Activated CD4-positive, alpha-beta memory T cell treated with anti-CD3 and anti-CD28 coated beads for 36 hours (primary cell): ENCODE measurements at regions of chr16 and their contacts with region 1.

Region 1: GRCh38 chr16:62711797-62712196 is 675.6 kb upstream of the CDH8 start:
- DNase-seq: no peak
- H3K4me3 Mint-ChIP-seq: no peak overlapping the region
- H3K27ac Mint-ChIP-seq: no peak overlapping the region
- H3K4me1 Mint-ChIP-seq: no peaks in the 10 kb centered on the region
- H3K27me3 Mint-ChIP-seq: no peaks in the 10 kb centered on the region

Region 2: GRCh38 chr16:62530426-62530825 is 181.4 kb before region 1 on chr16:
- CTCF ChIA-PET with region 1: no interaction called
- POLR2A ChIA-PET with region 1: no interaction called
- intact Hi-C with region 1: loop called (anchors 10 kb)
- DNase-seq: no peak
- H3K4me3 Mint-ChIP-seq: no peak overlapping the region
- H3K27ac Mint-ChIP-seq: no peak overlapping the region
- H3K4me1 Mint-ChIP-seq: no peaks in the 10 kb centered on the region
- H3K27me3 Mint-ChIP-seq: no peaks in the 10 kb centered on the region

Region 3: DNA sequence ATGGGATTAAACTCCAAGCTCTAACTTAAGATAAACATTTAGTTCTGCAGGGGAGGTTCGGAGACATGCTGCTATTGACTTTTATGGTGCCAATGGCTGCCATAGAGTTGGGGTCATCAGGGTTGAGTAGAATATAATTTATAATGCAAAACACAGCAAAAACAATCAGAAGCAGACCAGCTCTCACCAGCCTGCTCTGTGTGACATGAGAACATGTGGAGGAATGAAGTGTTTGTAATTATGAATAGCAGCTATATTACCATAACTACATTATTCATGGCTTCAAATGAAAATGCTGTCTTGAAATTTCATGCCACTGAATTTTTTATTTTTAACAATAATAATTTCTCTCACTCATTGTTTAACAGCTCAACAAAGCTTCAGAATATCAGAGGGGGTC is 30.0 kb before region 1 on chr16:
- CTCF ChIA-PET with region 1: no interaction called
- POLR2A ChIA-PET with region 1: no interaction called
- intact Hi-C with region 1: no loop called
- DNase-seq: no peak
- H3K4me3 Mint-ChIP-seq: no peak overlapping the region
- H3K27ac Mint-ChIP-seq: no peak overlapping the region
- H3K4me1 Mint-ChIP-seq: no peaks in the 10 kb centered on the region
- H3K27me3 Mint-ChIP-seq: no peaks in the 10 kb centered on the region

Region 4: DNA sequence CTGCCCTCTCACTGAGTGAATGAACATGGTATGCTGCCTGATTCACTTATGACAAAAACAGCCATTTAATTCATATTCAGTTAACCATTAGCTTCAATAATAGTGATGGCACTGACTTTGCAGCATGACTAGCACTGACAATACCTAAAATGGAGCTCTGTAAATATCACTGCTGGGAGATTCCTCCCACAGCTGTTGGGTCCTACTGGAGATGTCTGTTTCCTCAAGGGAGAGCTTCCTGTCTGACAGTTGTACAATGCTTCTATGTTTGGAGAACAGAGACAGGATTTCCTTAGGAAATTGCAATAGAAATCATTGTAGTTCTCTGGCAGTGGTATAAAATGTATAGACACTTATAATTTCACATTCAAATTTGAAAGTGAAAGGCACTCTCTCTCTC is 20.3 kb after region 1 on chr16:
- CTCF ChIA-PET with region 1: no interaction called
- POLR2A ChIA-PET with region 1: no interaction called
- intact Hi-C with region 1: no loop called
- DNase-seq: no peak
- H3K4me3 Mint-ChIP-seq: no peak overlapping the region
- H3K27ac Mint-ChIP-seq: no peak overlapping the region
- H3K4me1 Mint-ChIP-seq: no peaks in the 10 kb centered on the region
- H3K27me3 Mint-ChIP-seq: no peaks in the 10 kb centered on the region

Region 5: DNA sequence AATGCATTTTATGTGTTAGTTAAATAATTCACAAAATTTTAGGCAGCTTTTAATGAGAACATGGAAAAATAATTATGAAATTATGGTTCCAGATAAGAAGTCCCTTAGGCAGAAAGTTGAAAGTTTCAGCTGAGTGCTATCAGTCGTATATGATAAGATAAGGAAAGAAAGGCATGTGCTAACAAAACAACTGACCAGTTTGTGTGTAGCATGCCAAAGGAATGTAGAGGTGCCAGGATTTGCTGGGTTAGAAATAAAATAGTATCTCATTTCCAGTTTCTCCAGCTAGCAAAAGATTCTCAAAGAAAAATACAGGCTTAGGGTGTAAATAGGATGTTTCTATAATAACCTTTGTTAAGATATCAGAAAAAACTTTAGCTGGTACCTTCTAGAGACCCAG is 368.9 kb after region 1 on chr16:
- CTCF ChIA-PET with region 1: no interaction called
- POLR2A ChIA-PET with region 1: no interaction called
- intact Hi-C with region 1: no loop called
- DNase-seq: no peak
- H3K4me3 Mint-ChIP-seq: no peak overlapping the region
- H3K27ac Mint-ChIP-seq: no peak overlapping the region
- H3K4me1 Mint-ChIP-seq: no peaks in the 10 kb centered on the region
- H3K27me3 Mint-ChIP-seq: no peaks in the 10 kb centered on the region